ENCODE measurements at regions of chr7 and their contacts with region 1.

Region 1: GRCh38 chr7:38398725-38399321 is 125.4 kb upstream of the TARP start:
- DNase-seq: peak; percentile 20
- H3K4me3 Mint-ChIP-seq: no peak overlapping the region
- H3K27ac Mint-ChIP-seq: no peak overlapping the region
- H3K4me1 Mint-ChIP-seq: peaks cover 15% of the 10 kb centered on the region
- H3K27me3 Mint-ChIP-seq: peaks cover 12% of the 10 kb centered on the region

Region 2: GRCh38 chr7:38541440-38541839 is 142.6 kb after region 1 on chr7:
- intact Hi-C with region 1: loop called (anchors 2 kb)
- DNase-seq: no peak
- H3K4me3 Mint-ChIP-seq: no peak overlapping the region
- H3K27ac Mint-ChIP-seq: no peak overlapping the region
- H3K4me1 Mint-ChIP-seq: peaks cover 4% of the 10 kb centered on the region
- H3K27me3 Mint-ChIP-seq: peaks cover 16% of the 10 kb centered on the region

Region 3: GRCh38 chr7:38660427-38661099 is 261.7 kb after region 1 on chr7:
- intact Hi-C with region 1: loop called (anchors 1 kb)
- DNase-seq: no peak
- H3K4me3 Mint-ChIP-seq: no peak overlapping the region
- H3K27ac Mint-ChIP-seq: no peak overlapping the region
- H3K4me1 Mint-ChIP-seq: no peaks in the 10 kb centered on the region
- H3K27me3 Mint-ChIP-seq: peaks cover 30% of the 10 kb centered on the region